ENCODE measurements at regions of chr16 and their contacts with region 1.

Region 1: GRCh38 chr16:28823872-28824716 is 1.3 kb downstream of the ATXN2L start:
- DNase-seq: peak; percentile 99
- H3K4me3 ChIP-seq: peak overlapping the region; percentile 94 to 100 (median 99)
- H3K27ac ChIP-seq: peak overlapping the region; percentile 99 to 100 (median 100)
- H3K4me1 ChIP-seq: peaks cover 23 to 42% (median 30%) of the 10 kb centered on the region in 4 donors
- H3K27me3 ChIP-seq: no peaks in the 10 kb centered on the region
- CTCF ChIP-seq: peak; percentile 24 to 38 (median 28)
- EP300 ChIP-seq: no peak
- POLR2A ChIP-seq: peak; percentile 42

Region 2: DNA sequence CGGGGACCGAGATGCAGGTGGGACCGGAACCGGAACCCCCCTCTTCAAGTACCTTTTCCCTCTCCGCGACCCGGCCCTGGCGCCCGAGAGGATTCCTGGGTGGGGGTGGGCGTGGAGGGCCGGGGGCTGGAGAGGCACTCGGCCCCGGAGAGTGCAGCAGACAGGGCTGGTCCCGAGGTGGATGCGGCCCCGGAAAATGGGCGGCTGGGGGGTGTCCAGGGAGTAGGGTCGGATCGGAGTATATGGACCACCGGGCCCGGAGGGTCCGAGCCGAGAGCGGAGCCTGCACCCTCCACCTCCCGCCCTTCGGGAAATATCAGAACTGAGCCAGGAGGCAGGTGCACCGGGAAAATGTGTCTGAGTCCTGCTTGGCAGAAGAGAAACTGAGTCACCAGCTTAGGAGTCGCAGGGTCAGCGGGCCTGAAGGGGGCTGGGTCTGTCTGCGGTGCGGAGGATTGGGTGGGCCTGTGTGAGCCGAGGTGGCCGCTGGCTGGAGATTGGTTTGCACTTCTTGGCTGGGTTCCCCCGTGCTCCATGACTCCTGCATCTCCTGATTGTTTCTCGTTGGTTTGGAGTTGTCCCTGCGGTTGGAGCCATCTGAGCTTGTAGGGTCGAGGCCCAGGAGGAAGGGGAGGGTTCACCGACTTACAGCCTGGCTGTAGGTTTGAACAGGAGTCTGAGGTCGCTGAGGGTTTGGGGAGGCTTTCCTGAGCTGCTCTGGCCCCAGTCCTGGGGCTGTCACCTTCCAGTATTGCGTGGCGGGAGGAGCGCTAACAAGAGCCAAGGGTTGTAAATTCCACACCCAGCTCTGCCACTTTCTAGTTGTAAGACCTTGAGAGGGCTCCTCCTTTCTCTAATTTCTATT is 40.1 kb after region 1 on chr16:
- intact Hi-C with region 1: loop called (anchors 5 kb)
- DNase-seq: no peak
- H3K4me3 ChIP-seq: peak overlapping the region; percentile 75 to 93 (median 86)
- H3K27ac ChIP-seq: peak overlapping the region; percentile 89 to 93 (median 90)
- H3K4me1 ChIP-seq: peaks cover 16 to 43% (median 35%) of the 10 kb centered on the region in 4 donors
- H3K27me3 ChIP-seq: no peaks in the 10 kb centered on the region
- CTCF ChIP-seq: no peak
- EP300 ChIP-seq: no peak
- POLR2A ChIP-seq: no peak

Measured in esophagus muscularis mucosa (tissue), 4 donors.